ENCODE measurements at regions of chr3 and their contacts with region 1.

Region 1: DNA sequence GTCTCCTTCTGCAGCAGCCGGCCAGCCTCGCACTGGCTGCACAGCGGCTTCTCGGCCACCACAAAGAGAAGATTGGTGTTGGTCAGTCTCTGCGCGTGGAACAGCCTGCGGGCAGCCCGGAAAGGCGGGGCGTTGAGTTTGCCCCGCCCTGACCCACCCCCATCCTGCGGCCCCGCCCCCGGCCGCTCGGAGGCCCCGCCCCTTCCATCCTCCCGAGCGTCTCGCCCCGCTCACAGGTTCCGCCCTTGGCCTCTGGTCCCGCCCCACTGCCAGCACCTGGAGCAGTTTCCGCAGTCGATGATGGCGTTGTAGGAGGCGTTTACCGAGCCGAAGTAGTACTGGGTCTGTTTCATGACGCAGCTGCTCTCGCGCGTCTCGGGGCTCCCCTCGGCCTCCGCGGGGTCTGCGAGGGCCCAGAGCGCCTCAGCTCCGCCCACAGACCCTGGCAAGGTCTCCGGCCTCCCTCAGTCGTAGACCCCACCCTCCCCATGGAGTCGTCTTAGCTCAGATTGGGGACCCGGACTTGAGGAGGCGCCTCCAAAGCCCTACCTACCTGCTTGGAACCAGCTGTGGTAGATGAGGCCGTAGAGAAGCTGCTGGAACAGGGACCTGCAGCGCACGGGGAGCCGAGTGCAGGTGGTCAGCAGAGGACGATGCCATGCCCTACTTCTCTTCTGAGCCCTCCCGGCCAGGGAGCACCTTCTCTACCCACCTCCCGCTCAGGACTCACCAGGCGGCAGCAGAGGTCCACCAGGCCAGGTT is 5.9 kb upstream of the TMEM115 start:
- DNase-seq: peak; percentile 82 to 96 (median 94)
- ATAC-seq: peak; percentile 97
- H3K4me3 ChIP-seq: peak overlapping the region; percentile 99
- H3K4me3 Mint-ChIP-seq: peak overlapping the region; percentile 82 to 93 (median 90)
- H3K27ac ChIP-seq: peak overlapping the region; percentile 95
- H3K27ac Mint-ChIP-seq: peak overlapping the region; percentile 87 to 97 (median 94)
- H3K4me1 ChIP-seq: peaks cover 13 to 18% of the 10 kb centered on the region in 2 donors
- H3K4me1 Mint-ChIP-seq: peaks cover 8 to 36% (median 20%) of the 10 kb centered on the region in 7 donors
- H3K27me3 ChIP-seq: no peaks in the 10 kb centered on the region
- H3K27me3 Mint-ChIP-seq: no peaks in the 10 kb centered on the region

Region 2: DNA sequence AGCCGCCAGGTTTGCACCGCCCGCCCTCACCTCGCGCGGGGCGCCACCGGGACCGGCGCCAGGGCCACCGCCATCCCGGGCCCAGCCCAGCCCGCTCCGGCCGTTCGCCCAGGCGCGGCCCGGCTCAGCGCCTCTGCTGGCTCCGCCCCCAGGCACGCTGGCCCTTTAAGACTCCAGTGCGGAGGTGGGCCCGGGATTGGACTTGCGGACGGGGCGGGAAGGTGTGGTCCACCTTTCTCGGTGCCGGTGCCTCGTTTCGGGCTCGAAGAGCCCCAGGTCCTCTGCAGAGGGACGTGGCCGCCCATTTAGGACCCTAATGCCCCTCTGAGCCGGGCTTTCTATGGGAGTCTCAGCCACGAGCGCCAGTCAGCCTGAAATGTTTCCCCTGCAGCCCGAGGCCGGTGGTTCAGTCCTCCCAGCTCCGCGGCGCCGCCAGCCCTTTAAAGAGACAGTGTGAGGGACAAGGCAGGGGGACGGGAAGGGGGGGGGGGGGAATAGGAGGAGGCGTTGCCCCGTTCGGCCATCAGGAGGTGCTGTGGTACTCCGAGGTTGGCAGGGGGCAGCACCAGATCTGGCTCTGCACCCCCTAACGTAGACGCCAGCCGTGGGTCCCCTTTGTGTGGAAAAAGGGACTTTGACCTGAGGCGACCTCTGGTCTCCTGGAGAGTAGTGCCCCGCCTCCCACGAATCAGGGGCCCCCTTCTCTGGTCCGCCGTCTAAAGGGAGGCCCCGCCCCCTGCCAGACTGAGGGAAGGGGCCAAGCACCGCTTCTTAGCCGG is 43.7 kb before region 1 on chr3:
- CTCF ChIA-PET with region 1: interaction called, 4 read pairs
- POLR2A ChIA-PET with region 1: interaction called, 656 read pairs
- intact Hi-C with region 1: loop called in 1 of 2 experiments (anchors 1 kb)
- DNase-seq: peak; percentile 67 to 90 (median 83)
- ATAC-seq: peak; percentile 83
- H3K4me3 ChIP-seq: peak overlapping the region; percentile 97
- H3K4me3 Mint-ChIP-seq: peak overlapping the region; percentile 74 to 90 (median 82)
- H3K27ac ChIP-seq: peak overlapping the region; percentile 95
- H3K27ac Mint-ChIP-seq: peak overlapping the region; percentile 40 to 96 (median 93)
- H3K4me1 ChIP-seq: peaks cover 12 to 21% of the 10 kb centered on the region in 2 donors
- H3K4me1 Mint-ChIP-seq: peaks cover 21 to 45% (median 36%) of the 10 kb centered on the region in 7 donors
- H3K27me3 ChIP-seq: no peaks in the 10 kb centered on the region
- H3K27me3 Mint-ChIP-seq: no peaks in the 10 kb centered on the region

Region 3: GRCh38 chr3:50450209-50450921 is 85.1 kb after region 1 on chr3:
- CTCF ChIA-PET with region 1: no interaction called
- POLR2A ChIA-PET with region 1: interaction called, 7 read pairs
- intact Hi-C with region 1: loop called in 1 of 2 experiments (anchors 1 kb)
- DNase-seq: peak; percentile 57 to 75 (median 66)
- ATAC-seq: peak; percentile 86
- H3K4me3 ChIP-seq: peak overlapping the region; percentile 60
- H3K4me3 Mint-ChIP-seq: peak overlapping the region; percentile 82 to 91 (median 86)
- H3K27ac ChIP-seq: peak overlapping the region; percentile 81
- H3K27ac Mint-ChIP-seq: peak overlapping the region; percentile 85 to 98 (median 96)
- H3K4me1 ChIP-seq: peaks cover 13 to 16% of the 10 kb centered on the region in 2 donors
- H3K4me1 Mint-ChIP-seq: peaks cover 10 to 33% (median 28%) of the 10 kb centered on the region in 7 donors
- H3K27me3 ChIP-seq: no peaks in the 10 kb centered on the region
- H3K27me3 Mint-ChIP-seq: no peaks in the 10 kb centered on the region

Region 4: GRCh38 chr3:50503504-50504342 is 138.5 kb after region 1 on chr3 and contains the start of gene CACNA2D2:
- CTCF ChIA-PET with region 1: no interaction called
- POLR2A ChIA-PET with region 1: interaction called, 4 read pairs
- intact Hi-C with region 1: loop called in 1 of 2 experiments (anchors 2 kb)
- DNase-seq: peak; percentile 54 to 79 (median 74)
- ATAC-seq: peak; percentile 94
- H3K4me3 ChIP-seq: peak within 1 kb of the TSS; percentile 44
- H3K4me3 Mint-ChIP-seq: peak within 1 kb of the TSS; percentile 37 to 85 (median 76)
- H3K27ac ChIP-seq: peak within 1 kb of the TSS; percentile 45
- H3K27ac Mint-ChIP-seq: peak within 1 kb of the TSS in 5 of 9 donors; percentile 19 to 71 (median 43)
- H3K4me1 ChIP-seq: peaks cover 0 to 5% of the 10 kb centered on the region in 2 donors
- H3K4me1 Mint-ChIP-seq: peaks cover 0 to 15% (median 10%) of the 10 kb centered on the region in 7 donors
- H3K27me3 ChIP-seq: peaks cover 0 to 5% of the 10 kb centered on the region in 2 donors
- H3K27me3 Mint-ChIP-seq: peaks cover 11 to 56% (median 21%) of the 10 kb centered on the region in 5 donors
- total RNA-seq, gene CACNA2D2: 0.97 to 6.2 (median 2.5) TPM

Region 5: GRCh38 chr3:50542177-50543034 is 177.1 kb after region 1 on chr3:
- CTCF ChIA-PET with region 1: interaction called, 3 read pairs
- POLR2A ChIA-PET with region 1: no interaction called
- intact Hi-C with region 1: loop called in 1 of 2 experiments (anchors 1 kb)
- DNase-seq: peak; percentile 22 to 68 (median 44)
- ATAC-seq: peak; percentile 81
- H3K4me3 ChIP-seq: no peak overlapping the region
- H3K4me3 Mint-ChIP-seq: no peak overlapping the region
- H3K27ac ChIP-seq: no peak overlapping the region
- H3K27ac Mint-ChIP-seq: no peak overlapping the region
- H3K4me1 ChIP-seq: no peaks in the 10 kb centered on the region
- H3K4me1 Mint-ChIP-seq: peaks cover 0 to 5% (median 0%) of the 10 kb centered on the region in 7 donors
- H3K27me3 ChIP-seq: no peaks in the 10 kb centered on the region
- H3K27me3 Mint-ChIP-seq: peaks cover 0 to 36% (median 0%) of the 10 kb centered on the region in 5 donors

Region 6: DNA sequence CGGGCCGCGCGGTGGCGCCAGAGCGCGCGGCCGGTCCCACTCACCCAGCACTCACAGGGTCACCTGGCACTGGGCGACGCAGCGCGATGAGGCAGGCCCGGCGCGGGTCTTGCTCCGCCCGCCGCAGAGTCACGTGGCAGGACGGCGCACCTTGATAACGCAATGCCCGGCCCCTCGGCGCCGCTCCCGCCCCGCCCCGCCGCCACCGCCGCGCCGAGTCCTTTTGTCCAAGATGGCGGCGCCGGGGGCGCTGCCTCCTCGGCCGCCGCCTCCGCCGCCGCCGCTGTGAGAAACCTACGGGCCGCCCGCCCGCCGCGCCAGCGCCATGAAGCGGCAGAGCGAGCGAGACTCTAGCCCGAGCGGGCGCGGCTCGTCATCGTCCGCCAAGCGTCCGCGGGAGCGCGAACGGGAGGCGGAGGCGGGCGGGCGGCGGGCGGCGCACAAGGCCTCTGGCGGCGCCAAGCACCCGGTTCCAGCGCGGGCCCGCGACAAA is 1025.9 kb after region 1 on chr3 and contains the start of gene RBM15B:
- CTCF ChIA-PET with region 1: no interaction called
- POLR2A ChIA-PET with region 1: no interaction called
- intact Hi-C with region 1: loop called in 1 of 2 experiments (anchors 1 kb)
- DNase-seq: peak; percentile 94 to 98 (median 96)
- ATAC-seq: peak; percentile 95
- H3K4me3 ChIP-seq: peak within 1 kb of the TSS; percentile 52
- H3K4me3 Mint-ChIP-seq: peak within 1 kb of the TSS; percentile 76 to 89 (median 83)
- H3K27ac ChIP-seq: peak within 1 kb of the TSS; percentile 90
- H3K27ac Mint-ChIP-seq: peak within 1 kb of the TSS; percentile 79 to 91 (median 88)
- H3K4me1 ChIP-seq: peaks cover 46 to 53% of the 10 kb centered on the region in 2 donors
- H3K4me1 Mint-ChIP-seq: peaks cover 35 to 75% (median 67%) of the 10 kb centered on the region in 7 donors
- H3K27me3 ChIP-seq: no peaks in the 10 kb centered on the region
- H3K27me3 Mint-ChIP-seq: no peaks in the 10 kb centered on the region
- total RNA-seq, gene RBM15B: 29.9 to 40.6 (median 31.3) TPM

Measured in naive thymus-derived CD4-positive, alpha-beta T cell (primary cell).